CD14-positive monocyte (primary cell): ENCODE measurements at regions of chr16 and their contacts with region 1.

Region 1: GRCh38 chr16:31260136-31260918 is 552 bp downstream of the ITGAM start:
- DNase-seq: peak in 2 of 3 donors; percentile 37 to 44
- H3K4me3 ChIP-seq: peak overlapping the region; percentile 55 to 98 (median 97)
- H3K4me3 Mint-ChIP-seq: peak overlapping the region; percentile 93 to 98
- H3K27ac ChIP-seq: peak overlapping the region; percentile 54 to 81
- H3K27ac Mint-ChIP-seq: peak overlapping the region; percentile 90 to 98 (median 96)
- H3K4me1 ChIP-seq: peaks cover 73 to 82% of the 10 kb centered on the region in 2 donors
- H3K4me1 Mint-ChIP-seq: peaks cover 70% of the 10 kb centered on the region
- H3K27me3 ChIP-seq: no peaks in the 10 kb centered on the region
- H3K27me3 Mint-ChIP-seq: peaks cover 0 to 6% (median 2%) of the 10 kb centered on the region in 3 donors
- CTCF ChIP-seq: no peak

Region 2: GRCh38 chr16:31215287-31216162 is 44.8 kb before region 1 on chr16:
- intact Hi-C with region 1: loop called (anchors 5 kb)
- DNase-seq: peak; percentile 30 to 40 (median 36)
- H3K4me3 ChIP-seq: peak overlapping the region; percentile 36 to 79 (median 52)
- H3K4me3 Mint-ChIP-seq: peak overlapping the region; percentile 81 to 97
- H3K27ac ChIP-seq: no peak overlapping the region
- H3K27ac Mint-ChIP-seq: peak overlapping the region in 5 of 7 donors; percentile 11 to 49 (median 27)
- H3K4me1 ChIP-seq: peaks cover 34 to 40% of the 10 kb centered on the region in 2 donors
- H3K4me1 Mint-ChIP-seq: peaks cover 41% of the 10 kb centered on the region
- H3K27me3 ChIP-seq: peaks cover 9 to 48% of the 10 kb centered on the region in 2 donors
- H3K27me3 Mint-ChIP-seq: peaks cover 55 to 67% (median 56%) of the 10 kb centered on the region in 3 donors
- CTCF ChIP-seq: no peak

Region 3: GRCh38 chr16:31243734-31244670 is 16.3 kb before region 1 on chr16:
- intact Hi-C with region 1: loop called in 1 of 2 experiments (anchors 2 kb)
- DNase-seq: peak; percentile 82 to 95 (median 92)
- H3K4me3 ChIP-seq: peak overlapping the region in 1 of 3 experiments; percentile 55
- H3K4me3 Mint-ChIP-seq: peak overlapping the region in 1 of 2 donors; percentile 61
- H3K27ac ChIP-seq: peak overlapping the region; percentile 46 to 82
- H3K27ac Mint-ChIP-seq: peak overlapping the region; percentile 77 to 93 (median 88)
- H3K4me1 ChIP-seq: peaks cover 39 to 50% of the 10 kb centered on the region in 2 donors
- H3K4me1 Mint-ChIP-seq: peaks cover 45% of the 10 kb centered on the region
- H3K27me3 ChIP-seq: no peaks in the 10 kb centered on the region
- H3K27me3 Mint-ChIP-seq: no peaks in the 10 kb centered on the region
- CTCF ChIP-seq: no peak

Region 4: GRCh38 chr16:31344712-31345111 is 84.4 kb after region 1 on chr16:
- intact Hi-C with region 1: loop called in 1 of 2 experiments (anchors 5 kb)
- DNase-seq: peak; percentile 62 to 74 (median 65)
- H3K4me3 ChIP-seq: peak overlapping the region in 1 of 3 experiments; percentile 41
- H3K4me3 Mint-ChIP-seq: peak overlapping the region; percentile 67 to 82
- H3K27ac ChIP-seq: peak overlapping the region; percentile 31 to 64
- H3K27ac Mint-ChIP-seq: peak overlapping the region; percentile 46 to 92 (median 80)
- H3K4me1 ChIP-seq: peaks cover 40 to 46% of the 10 kb centered on the region in 2 donors
- H3K4me1 Mint-ChIP-seq: peaks cover 48% of the 10 kb centered on the region
- H3K27me3 ChIP-seq: no peaks in the 10 kb centered on the region
- H3K27me3 Mint-ChIP-seq: peaks cover 0 to 7% (median 0%) of the 10 kb centered on the region in 3 donors
- CTCF ChIP-seq: no peak

Region 5: DNA sequence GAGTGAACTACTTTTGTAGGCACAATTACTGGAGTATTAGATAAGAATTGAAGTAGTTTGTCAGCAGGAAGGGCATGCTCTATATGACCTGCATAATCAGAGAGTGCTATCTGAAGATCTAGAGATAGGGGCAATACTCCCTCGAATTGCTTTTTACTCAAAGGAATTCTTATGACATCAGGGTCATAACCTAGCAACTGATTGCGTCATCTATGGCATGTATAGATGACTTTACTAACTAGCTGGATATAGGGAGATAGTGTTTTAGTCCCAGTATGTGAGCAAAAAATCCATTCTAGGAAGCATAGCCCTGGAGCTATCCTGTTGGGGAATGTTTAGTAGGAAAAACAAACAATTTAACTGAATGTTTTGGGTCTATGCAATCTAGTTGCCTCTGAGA is 503.8 kb after region 1 on chr16:
- intact Hi-C with region 1: no loop called
- DNase-seq: no peak
- H3K4me3 ChIP-seq: no peak overlapping the region
- H3K4me3 Mint-ChIP-seq: no peak overlapping the region
- H3K27ac ChIP-seq: no peak overlapping the region
- H3K27ac Mint-ChIP-seq: no peak overlapping the region
- H3K4me1 ChIP-seq: no peaks in the 10 kb centered on the region
- H3K4me1 Mint-ChIP-seq: no peaks in the 10 kb centered on the region
- H3K27me3 ChIP-seq: no peaks in the 10 kb centered on the region
- H3K27me3 Mint-ChIP-seq: no peaks in the 10 kb centered on the region
- CTCF ChIP-seq: no peak